Left ventricle myocardium inferior (tissue), 1 donor: ENCODE measurements at regions of chr1 and their contacts with region 1.

Region 1: GRCh38 chr1:153985941-153986761 is at the start of gene RAB13:
- DNase-seq: peak; percentile 86
- H3K4me3 ChIP-seq: peak within 1 kb of the TSS; percentile 74
- H3K27ac ChIP-seq: peak within 1 kb of the TSS; percentile 91
- H3K4me1 ChIP-seq: peaks cover 43% of the 10 kb centered on the region
- H3K27me3 ChIP-seq: no peaks in the 10 kb centered on the region
- CTCF ChIP-seq: no peak
- total RNA-seq, gene RAB13: 59.3 TPM

Region 2: DNA sequence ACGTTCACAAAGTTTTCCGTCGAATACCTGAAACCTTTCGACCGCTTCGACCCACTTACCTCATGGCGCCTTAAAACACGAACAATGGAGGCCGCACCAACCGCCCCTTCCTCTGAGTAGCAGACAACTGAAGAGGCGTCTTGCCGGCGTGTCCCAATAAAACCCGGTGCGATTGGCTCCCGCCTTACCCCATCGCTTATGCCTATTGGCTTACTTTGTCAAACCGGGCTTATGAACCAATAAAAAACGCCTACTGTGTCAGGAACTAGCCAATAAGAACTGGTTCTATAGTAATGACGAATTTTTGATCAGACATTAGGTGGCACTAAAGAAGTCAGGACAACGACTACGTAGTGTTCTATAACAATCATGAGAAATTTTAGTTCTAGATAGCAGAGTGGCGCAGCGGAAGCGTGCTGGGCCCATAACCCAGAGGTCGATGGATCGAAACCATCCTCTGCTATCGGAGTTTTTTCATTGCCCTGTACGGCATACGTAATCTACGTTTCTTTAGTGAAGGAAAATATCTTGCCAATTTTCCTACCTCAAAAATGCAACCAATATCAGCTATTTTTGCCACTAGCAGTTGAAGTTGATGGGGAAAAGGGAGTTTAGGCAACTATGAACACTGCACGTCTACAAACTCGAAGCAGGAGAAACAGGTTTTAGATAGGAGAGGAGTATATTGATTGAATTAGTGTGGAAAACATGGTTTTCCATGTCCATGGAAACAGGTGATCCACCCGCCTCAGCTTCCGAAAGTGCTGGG is 315.1 kb before region 1 on chr1 and contains the start of gene ILF2:
- intact Hi-C with region 1: loop called (anchors 10 kb)
- DNase-seq: peak; percentile 98
- H3K4me3 ChIP-seq: peak within 1 kb of the TSS; percentile 91
- H3K27ac ChIP-seq: peak within 1 kb of the TSS; percentile 93
- H3K4me1 ChIP-seq: peaks cover 36% of the 10 kb centered on the region
- H3K27me3 ChIP-seq: no peaks in the 10 kb centered on the region
- CTCF ChIP-seq: no peak
- total RNA-seq, gene ILF2: 61.6 TPM

Region 3: GRCh38 chr1:153796791-153797659 is 189.1 kb before region 1 on chr1:
- intact Hi-C with region 1: loop called (anchors 10 kb)
- DNase-seq: peak; percentile 67
- H3K4me3 ChIP-seq: no peak overlapping the region
- H3K27ac ChIP-seq: no peak overlapping the region
- H3K4me1 ChIP-seq: no peaks in the 10 kb centered on the region
- H3K27me3 ChIP-seq: no peaks in the 10 kb centered on the region
- CTCF ChIP-seq: peak; percentile 97